Mammary epithelial cell (primary cell): ENCODE measurements at regions of chr12 and their contacts with region 1.

Region 1: GRCh38 chr12:53670299-53670698 is 5.6 kb downstream of the ATP5MC2 start:
- DNase-seq: no peak
- H3K4me3 ChIP-seq: no peak overlapping the region
- H3K27ac ChIP-seq: no peak overlapping the region
- H3K4me1 ChIP-seq: peaks cover 11% of the 10 kb centered on the region
- H3K27me3 ChIP-seq: no peaks in the 10 kb centered on the region
- CTCF ChIP-seq: no peak

Region 2: DNA sequence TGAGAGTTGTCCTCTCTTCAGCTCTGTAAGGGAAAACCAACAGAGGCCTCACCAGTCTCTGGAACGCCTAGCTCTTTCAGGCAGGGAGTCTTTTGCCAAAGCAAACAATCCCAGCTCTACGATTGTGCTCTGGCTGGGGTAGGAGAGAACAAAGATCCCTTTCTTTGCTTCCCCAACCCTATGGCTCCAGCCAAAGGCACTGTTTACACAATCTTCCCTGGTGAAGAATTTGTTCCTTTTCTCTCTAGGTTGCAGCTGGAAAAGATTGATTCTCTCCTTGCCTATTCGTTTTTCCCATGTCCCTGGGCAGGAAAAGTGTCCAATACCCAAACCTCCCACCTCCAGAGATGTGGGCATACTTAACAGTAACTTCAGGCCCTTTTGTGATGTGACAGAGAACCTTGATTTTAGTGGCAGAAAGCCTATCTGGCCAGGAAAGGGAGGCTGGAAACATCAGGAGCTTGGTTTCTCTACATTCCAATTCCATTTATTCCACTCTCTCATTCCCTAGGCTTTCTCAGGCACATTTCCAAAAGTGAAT is 11.2 kb before region 1 on chr12:
- CTCF ChIA-PET with region 1: interaction called, 3 read pairs
- dilution Hi-C with region 1: no loop called
- in situ Hi-C with region 1: no loop called
- intact Hi-C with region 1: loop called (anchors 1 kb)
- DNase-seq: peak; percentile 92
- H3K4me3 ChIP-seq: peak overlapping the region in 1 of 3 experiments; percentile 12
- H3K27ac ChIP-seq: peak overlapping the region; percentile 87
- H3K4me1 ChIP-seq: peaks cover 27% of the 10 kb centered on the region
- H3K27me3 ChIP-seq: no peaks in the 10 kb centered on the region
- CTCF ChIP-seq: no peak

Region 3: DNA sequence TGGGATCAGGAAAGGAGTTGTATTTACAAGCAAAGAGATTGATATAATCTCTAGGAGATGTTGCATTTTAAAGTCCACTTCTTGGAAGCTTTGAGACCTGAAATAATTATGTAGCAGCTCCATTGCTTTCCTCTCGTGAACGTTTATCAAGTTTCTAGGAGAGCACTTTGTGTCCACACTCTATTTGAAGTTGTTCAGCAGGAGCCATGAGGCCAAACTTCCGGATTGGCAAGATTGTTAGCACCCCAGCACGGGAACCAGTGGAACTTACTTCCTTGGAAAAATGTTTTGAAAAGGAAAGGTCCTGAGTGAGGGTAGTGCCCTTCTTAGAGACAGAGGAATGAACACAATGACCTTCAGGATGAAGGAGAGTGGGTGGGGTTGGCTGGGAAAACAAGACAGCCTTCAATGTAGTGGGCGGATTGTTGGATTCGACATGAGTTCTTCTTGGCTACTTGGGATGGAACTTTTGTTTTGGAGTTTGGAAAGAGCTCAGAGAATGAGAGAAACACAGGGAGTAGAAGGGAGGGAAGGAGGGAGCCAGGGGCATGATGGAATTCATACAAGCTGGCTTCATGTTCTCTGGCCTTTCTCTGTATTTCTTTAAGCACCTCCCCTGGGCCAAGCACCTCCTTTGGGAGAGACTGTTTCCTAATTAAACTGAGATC is 105.3 kb after region 1 on chr12:
- CTCF ChIA-PET with region 1: no interaction called
- dilution Hi-C with region 1: no loop called
- in situ Hi-C with region 1: no loop called
- intact Hi-C with region 1: no loop called
- DNase-seq: no peak
- H3K4me3 ChIP-seq: no peak overlapping the region
- H3K27ac ChIP-seq: no peak overlapping the region
- H3K4me1 ChIP-seq: peaks cover 18% of the 10 kb centered on the region
- H3K27me3 ChIP-seq: no peaks in the 10 kb centered on the region
- CTCF ChIP-seq: no peak

Region 4: DNA sequence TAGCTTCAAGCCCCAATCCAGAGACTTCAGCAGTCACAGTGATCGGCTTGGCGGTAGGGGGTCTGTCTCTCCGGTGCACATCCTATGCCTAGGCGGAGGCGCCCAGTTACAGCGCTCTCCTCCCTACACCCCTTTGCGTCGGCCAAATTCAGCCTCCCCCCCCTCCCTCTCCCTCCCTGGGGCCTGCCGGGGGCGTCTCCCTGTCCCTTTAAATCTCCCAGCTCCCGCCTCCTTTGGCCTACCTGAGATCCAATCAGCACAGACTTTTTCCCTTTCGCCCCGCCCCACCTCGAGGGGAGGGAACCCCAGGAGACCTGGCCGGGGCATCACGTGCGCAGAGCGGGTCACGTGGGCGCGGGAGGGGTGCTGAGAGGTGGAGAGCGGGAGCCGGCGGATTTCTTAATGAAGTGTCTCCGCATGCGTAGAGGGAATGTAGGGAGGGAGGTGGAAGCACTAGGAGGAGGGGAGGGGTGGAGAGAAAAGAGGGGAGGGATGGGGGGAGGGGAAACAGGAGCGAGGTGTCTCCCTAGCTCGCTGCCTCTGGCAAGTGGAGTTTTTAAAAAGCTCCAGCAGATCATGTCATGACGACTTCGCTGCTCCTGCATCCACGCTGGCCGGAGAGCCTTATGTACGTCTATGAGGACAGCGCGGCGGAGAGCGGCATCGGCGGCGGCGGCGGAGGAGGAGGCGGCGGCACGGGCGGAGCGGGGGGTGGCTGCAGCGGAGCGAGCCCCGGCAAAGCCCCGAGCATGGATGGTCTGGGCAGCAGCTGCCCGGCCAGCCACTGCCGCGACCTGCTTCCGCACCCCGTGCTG is 268.2 kb after region 1 on chr12 and contains the start of gene HOXC13:
- CTCF ChIA-PET with region 1: no interaction called
- dilution Hi-C with region 1: no loop called
- in situ Hi-C with region 1: no loop called
- intact Hi-C with region 1: no loop called
- DNase-seq: peak; percentile 100
- H3K4me3 ChIP-seq: peak within 1 kb of the TSS; percentile 73 to 89 (median 88)
- H3K27ac ChIP-seq: peak within 1 kb of the TSS; percentile 40
- H3K4me1 ChIP-seq: peaks cover 15% of the 10 kb centered on the region
- H3K27me3 ChIP-seq: no peaks in the 10 kb centered on the region
- CTCF ChIP-seq: no peak
- total RNA-seq, gene HOXC13: 10.2 to 15.7 TPM